ENCODE measurements at regions of chr3 and their contacts with region 1.

Region 1: GRCh38 chr3:169020356-169020755 is 643.2 kb downstream of the MECOM start:
- DNase-seq: no peak
- ATAC-seq: no peak
- H3K4me3 Mint-ChIP-seq: no peak overlapping the region
- H3K27ac Mint-ChIP-seq: no peak overlapping the region
- H3K4me1 Mint-ChIP-seq: no peaks in the 10 kb centered on the region
- H3K27me3 Mint-ChIP-seq: no peaks in the 10 kb centered on the region

Region 2: GRCh38 chr3:167116120-167116922 is 1904.0 kb before region 1 on chr3:
- CTCF ChIA-PET with region 1: no interaction called
- POLR2A ChIA-PET with region 1: interaction called, 12 read pairs
- intact Hi-C with region 1: no loop called
- DNase-seq: no peak
- ATAC-seq: no peak
- H3K4me3 Mint-ChIP-seq: no peak overlapping the region
- H3K27ac Mint-ChIP-seq: no peak overlapping the region
- H3K4me1 Mint-ChIP-seq: no peaks in the 10 kb centered on the region
- H3K27me3 Mint-ChIP-seq: no peaks in the 10 kb centered on the region

Region 3: GRCh38 chr3:169002689-169003088 is 17.7 kb before region 1 on chr3:
- CTCF ChIA-PET with region 1: no interaction called
- POLR2A ChIA-PET with region 1: no interaction called
- intact Hi-C with region 1: no loop called
- DNase-seq: no peak
- ATAC-seq: no peak
- H3K4me3 Mint-ChIP-seq: no peak overlapping the region
- H3K27ac Mint-ChIP-seq: no peak overlapping the region
- H3K4me1 Mint-ChIP-seq: no peaks in the 10 kb centered on the region
- H3K27me3 Mint-ChIP-seq: no peaks in the 10 kb centered on the region

Region 4: GRCh38 chr3:170499565-170500156 is 1479.3 kb after region 1 on chr3:
- CTCF ChIA-PET with region 1: no interaction called
- POLR2A ChIA-PET with region 1: no interaction called
- intact Hi-C with region 1: no loop called
- DNase-seq: peak; percentile 30
- ATAC-seq: no peak
- H3K4me3 Mint-ChIP-seq: no peak overlapping the region
- H3K27ac Mint-ChIP-seq: no peak overlapping the region
- H3K4me1 Mint-ChIP-seq: no peaks in the 10 kb centered on the region
- H3K27me3 Mint-ChIP-seq: peaks cover 3% of the 10 kb centered on the region